Posterior vena cava (tissue), 2 donors: ENCODE measurements at regions of chr14 and their contacts with region 1.

Region 1: DNA sequence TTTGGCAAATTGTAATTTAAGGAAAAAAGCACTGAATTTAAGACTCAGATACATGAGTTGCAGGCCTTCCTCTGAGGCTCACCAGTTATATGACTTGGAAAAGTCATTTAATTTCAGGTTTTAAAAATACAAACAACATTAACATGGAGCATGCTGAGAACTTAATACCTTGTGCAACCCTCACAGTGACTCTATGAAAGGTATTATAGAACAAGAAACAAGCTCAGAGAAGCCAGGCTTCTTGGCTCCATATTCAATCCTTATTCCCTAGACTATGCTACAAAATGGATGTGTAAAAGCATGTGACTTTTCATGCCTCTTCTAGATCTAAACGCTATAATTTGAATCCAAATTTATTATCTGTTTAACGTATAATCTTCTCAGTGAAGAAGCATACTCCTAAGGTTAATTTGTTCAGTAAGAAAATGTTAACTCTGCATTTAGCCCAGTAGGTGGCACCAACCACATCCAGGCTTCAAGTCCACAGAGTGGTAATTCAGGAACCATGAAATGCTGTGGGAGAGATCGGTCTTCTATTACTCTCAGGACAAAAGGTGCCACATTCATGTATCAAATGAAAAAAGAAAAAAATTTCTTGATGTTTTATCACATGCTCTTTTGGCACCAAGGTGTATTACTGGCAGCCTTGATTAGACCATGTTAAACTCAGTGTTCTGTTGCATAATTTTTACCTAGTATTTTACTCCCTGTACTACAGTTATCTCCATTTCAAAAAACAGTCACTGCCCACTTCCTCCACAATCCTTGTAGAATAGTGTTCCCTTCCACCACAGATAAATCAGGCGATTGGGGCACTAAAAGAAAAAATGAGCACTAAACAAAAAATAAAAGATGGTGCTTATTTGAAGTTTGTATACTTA is 9.3 kb downstream of the CCDC196 start:
- DNase-seq: no peak

Region 2: GRCh38 chr14:67111022-67111421 is 615.6 kb after region 1 on chr14:
- intact Hi-C with region 1: loop called in 1 of 2 experiments (anchors 10 kb)
- DNase-seq: no peak